ENCODE measurements at regions of chr9 and their contacts with region 1.

Region 1: GRCh38 chr9:132669698-132670456 is at the start of gene DDX31:
- DNase-seq: peak; percentile 75
- H3K4me3 Mint-ChIP-seq: peak within 1 kb of the TSS; percentile 95
- H3K27ac Mint-ChIP-seq: peak within 1 kb of the TSS; percentile 91
- H3K4me1 Mint-ChIP-seq: peaks cover 22% of the 10 kb centered on the region
- H3K27me3 Mint-ChIP-seq: no peaks in the 10 kb centered on the region
- CTCF ChIP-seq: no peak
- total RNA-seq, gene DDX31: 28.5 and 28.8 TPM in 2 replicates

Region 2: DNA sequence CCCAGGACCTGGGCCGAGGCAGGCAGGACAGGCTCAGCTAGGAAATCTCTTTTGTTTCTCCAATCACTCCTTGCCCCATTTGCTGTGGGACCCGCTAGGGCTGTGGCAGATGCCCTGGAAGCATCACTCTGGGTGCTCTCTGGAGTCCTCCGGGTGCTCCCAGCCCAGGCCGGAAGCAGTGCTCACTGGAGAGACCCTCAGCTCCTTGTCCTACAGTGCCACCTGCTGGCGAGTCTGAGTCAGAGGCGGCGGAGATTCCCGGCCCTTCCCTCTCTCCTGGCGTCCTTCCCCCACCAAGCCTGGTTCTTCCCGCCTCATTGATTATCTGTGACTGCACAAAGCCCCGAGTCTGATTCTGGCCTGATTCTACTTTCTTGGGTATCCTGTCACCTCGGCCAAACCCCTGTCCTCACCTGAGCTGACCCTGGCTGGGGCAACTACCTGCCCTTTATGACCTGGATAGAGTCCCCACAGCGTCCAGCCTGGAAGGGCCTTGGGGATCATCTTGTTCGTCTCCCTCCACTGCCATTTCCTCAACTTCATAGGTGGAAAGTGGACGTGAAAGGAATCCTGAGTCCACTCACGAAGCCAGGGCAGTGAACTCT is 94.8 kb before region 1 on chr9:
- CTCF ChIA-PET with region 1: no interaction called
- POLR2A ChIA-PET with region 1: no interaction called
- intact Hi-C with region 1: no loop called
- DNase-seq: peak; percentile 73
- H3K4me3 Mint-ChIP-seq: no peak overlapping the region
- H3K27ac Mint-ChIP-seq: no peak overlapping the region
- H3K4me1 Mint-ChIP-seq: peaks cover 5% of the 10 kb centered on the region
- H3K27me3 Mint-ChIP-seq: peaks cover 78% of the 10 kb centered on the region
- CTCF ChIP-seq: peak; percentile 81

Region 3: DNA sequence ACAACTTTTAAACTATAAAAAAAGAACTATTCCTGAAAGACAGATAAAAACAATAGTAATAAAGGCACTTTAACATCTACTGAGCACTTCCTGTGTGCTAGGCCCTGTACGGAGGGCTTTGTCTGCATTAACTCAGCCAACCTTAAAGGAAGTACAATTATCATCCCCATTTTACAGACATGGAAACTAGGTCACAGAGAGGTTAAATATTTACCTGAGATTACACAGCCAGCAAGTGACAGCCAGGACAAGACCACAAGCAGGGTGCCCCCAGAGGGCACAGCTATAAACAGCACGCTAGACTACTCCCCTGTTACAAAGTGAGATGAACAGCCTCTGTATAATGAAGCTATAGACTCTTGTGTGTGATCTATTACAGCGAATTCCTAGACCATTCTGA is 25.6 kb before region 1 on chr9:
- CTCF ChIA-PET with region 1: interaction called, 3 read pairs
- POLR2A ChIA-PET with region 1: interaction called, 10 read pairs
- intact Hi-C with region 1: no loop called
- DNase-seq: no peak
- H3K4me3 Mint-ChIP-seq: no peak overlapping the region
- H3K27ac Mint-ChIP-seq: no peak overlapping the region
- H3K4me1 Mint-ChIP-seq: no peaks in the 10 kb centered on the region
- H3K27me3 Mint-ChIP-seq: no peaks in the 10 kb centered on the region
- CTCF ChIP-seq: no peak

Region 4: DNA sequence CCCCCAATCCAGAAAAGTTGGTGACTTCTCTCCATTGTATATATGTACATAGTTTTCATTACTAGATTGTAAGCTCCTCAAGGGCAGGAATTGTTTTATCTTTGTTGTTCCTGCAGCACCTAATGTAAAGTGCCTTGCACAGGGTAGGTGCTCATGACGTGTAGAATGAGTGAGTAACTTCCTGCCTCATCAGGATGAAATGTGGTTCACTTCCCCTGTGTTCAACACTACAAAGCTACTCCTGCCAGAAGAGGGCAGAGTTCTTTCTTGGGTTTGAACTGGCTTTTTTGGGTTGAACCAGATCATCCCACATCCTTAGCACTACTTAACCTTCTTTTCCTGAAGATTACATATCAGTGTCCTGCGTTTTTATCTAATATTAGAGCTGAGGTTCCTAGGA is 24.3 kb after region 1 on chr9:
- CTCF ChIA-PET with region 1: no interaction called
- POLR2A ChIA-PET with region 1: interaction called, 21 read pairs
- intact Hi-C with region 1: no loop called
- DNase-seq: no peak
- H3K4me3 Mint-ChIP-seq: no peak overlapping the region
- H3K27ac Mint-ChIP-seq: no peak overlapping the region
- H3K4me1 Mint-ChIP-seq: no peaks in the 10 kb centered on the region
- H3K27me3 Mint-ChIP-seq: no peaks in the 10 kb centered on the region
- CTCF ChIP-seq: no peak

Measured in MCF 10A (cell line).